ENCODE measurements at regions of chr1 and their contacts with region 1.

Region 1: DNA sequence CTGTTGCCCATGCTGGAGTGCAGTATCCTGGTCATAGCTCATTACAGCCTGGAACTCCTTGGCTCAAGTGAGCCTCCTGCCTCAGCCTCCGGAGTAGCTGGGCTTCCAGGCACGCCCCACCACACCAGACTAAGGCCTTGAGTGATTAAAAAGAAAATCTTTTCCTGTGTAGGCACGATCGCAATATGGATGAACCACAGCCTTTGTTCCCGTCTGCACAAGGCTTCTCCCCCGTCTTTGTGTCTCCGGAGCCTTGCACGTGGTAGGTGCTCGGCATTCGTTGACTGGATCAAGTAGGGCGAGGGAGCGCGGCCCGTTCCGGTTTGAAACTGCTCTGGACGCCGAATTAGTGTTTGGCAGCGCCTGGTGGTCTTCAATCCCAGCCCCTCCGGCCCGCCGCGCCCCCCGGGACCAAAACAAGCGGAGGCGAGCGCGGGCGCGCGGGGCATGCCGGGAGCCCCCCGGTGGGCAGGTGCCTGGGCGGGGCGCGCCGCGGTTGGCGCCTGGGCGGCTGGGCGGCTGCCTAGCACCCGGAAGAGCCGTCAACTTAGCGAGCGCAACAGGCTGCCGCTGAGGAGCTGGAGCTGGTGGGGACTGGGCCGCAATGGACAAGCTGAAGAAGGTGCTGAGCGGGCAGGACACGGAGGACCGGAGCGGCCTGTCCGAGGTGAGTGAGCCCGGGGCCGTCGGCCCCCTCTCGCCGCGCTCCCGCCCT is at the start of gene SFT2D2:
- DNase-seq: peak; percentile 86
- H3K4me3 Mint-ChIP-seq: peak within 1 kb of the TSS; percentile 88
- H3K27ac Mint-ChIP-seq: peak within 1 kb of the TSS; percentile 93
- H3K4me1 Mint-ChIP-seq: peaks cover 49% of the 10 kb centered on the region
- H3K27me3 Mint-ChIP-seq: no peaks in the 10 kb centered on the region
- CTCF ChIP-seq: no peak
- total RNA-seq, gene SFT2D2: 56.5 and 67.5 TPM in 2 replicates

Region 2: DNA sequence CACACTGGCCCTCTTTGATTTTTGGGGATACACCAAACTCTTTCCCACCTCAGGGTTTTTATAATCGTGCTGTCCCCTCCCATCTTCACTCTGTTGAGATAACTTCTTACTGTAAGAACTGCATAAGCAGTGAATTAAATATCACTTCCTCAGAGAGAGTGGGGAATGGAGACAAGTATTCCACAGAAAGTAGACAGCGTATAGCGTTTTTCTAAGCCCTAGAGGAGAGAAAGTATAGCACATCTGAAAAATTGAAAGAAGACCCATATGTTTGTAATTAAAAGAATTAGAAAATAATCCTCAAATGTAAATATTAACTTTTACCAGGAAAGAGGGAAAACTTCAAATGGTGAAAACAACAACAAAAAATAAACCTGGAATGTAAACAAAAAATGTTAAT is 156.2 kb before region 1 on chr1:
- CTCF ChIA-PET with region 1: no interaction called
- POLR2A ChIA-PET with region 1: no interaction called
- intact Hi-C with region 1: no loop called
- DNase-seq: no peak
- H3K4me3 Mint-ChIP-seq: no peak overlapping the region
- H3K27ac Mint-ChIP-seq: no peak overlapping the region
- H3K4me1 Mint-ChIP-seq: no peaks in the 10 kb centered on the region
- H3K27me3 Mint-ChIP-seq: no peaks in the 10 kb centered on the region
- CTCF ChIP-seq: no peak

Region 3: GRCh38 chr1:168092566-168093355 is 132.9 kb before region 1 on chr1:
- CTCF ChIA-PET with region 1: interaction called, 8 read pairs
- POLR2A ChIA-PET with region 1: no interaction called
- intact Hi-C with region 1: loop called (anchors 2 kb)
- DNase-seq: peak; percentile 57
- H3K4me3 Mint-ChIP-seq: no peak overlapping the region
- H3K27ac Mint-ChIP-seq: no peak overlapping the region
- H3K4me1 Mint-ChIP-seq: peaks cover 4% of the 10 kb centered on the region
- H3K27me3 Mint-ChIP-seq: no peaks in the 10 kb centered on the region
- CTCF ChIP-seq: peak; percentile 61

Region 4: GRCh38 chr1:168178638-168179437 is 46.8 kb before region 1 on chr1 and contains the start of gene TIPRL:
- CTCF ChIA-PET with region 1: interaction called, 13 read pairs
- POLR2A ChIA-PET with region 1: interaction called, 93 read pairs
- intact Hi-C with region 1: loop called (anchors 1 kb)
- DNase-seq: peak; percentile 100
- H3K4me3 Mint-ChIP-seq: no peak within 1 kb of the TSS
- H3K27ac Mint-ChIP-seq: no peak within 1 kb of the TSS
- H3K4me1 Mint-ChIP-seq: peaks cover 7% of the 10 kb centered on the region
- H3K27me3 Mint-ChIP-seq: no peaks in the 10 kb centered on the region
- CTCF ChIP-seq: peak; percentile 73
- total RNA-seq, gene TIPRL: 90.9 and 111 TPM in 2 replicates

Region 5: DNA sequence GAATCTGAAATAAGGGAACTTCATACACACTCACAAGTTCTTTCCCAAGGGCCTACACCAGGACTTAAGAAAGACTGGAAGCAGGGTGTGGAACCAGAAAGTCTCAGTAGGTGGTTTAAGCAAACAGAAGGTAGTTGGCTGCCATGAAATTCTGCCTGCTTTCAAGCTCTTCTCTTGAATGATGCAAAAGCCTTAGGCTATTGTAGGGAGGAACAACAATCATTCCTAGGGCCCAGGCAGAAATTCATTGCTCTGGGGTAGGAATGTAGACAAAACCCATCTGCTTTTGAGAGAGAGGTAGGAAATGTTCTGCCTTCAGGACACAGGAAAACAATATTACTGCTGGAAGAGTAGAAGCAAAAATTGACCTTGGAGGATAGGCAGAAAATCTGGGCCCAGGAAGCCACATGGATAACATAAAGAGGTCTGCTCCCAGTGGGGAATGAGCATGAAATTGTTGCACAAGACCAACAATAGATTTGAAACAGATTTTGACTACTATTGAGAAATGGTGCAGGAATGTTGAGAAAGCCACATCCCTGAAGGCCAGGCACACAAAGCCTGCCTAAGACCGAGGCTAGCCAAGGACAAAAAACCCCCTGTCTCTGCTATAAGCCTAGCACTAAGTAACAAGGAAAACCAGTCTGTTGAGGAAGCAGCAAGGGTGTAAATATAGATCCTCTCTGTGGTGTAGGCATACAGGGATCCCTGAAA is 22.5 kb before region 1 on chr1:
- CTCF ChIA-PET with region 1: interaction called, 3 read pairs
- POLR2A ChIA-PET with region 1: interaction called, 11 read pairs
- intact Hi-C with region 1: no loop called
- DNase-seq: peak; percentile 72
- H3K4me3 Mint-ChIP-seq: no peak overlapping the region
- H3K27ac Mint-ChIP-seq: peak overlapping the region; percentile 69
- H3K4me1 Mint-ChIP-seq: peaks cover 27% of the 10 kb centered on the region
- H3K27me3 Mint-ChIP-seq: no peaks in the 10 kb centered on the region
- CTCF ChIP-seq: no peak

Region 6: DNA sequence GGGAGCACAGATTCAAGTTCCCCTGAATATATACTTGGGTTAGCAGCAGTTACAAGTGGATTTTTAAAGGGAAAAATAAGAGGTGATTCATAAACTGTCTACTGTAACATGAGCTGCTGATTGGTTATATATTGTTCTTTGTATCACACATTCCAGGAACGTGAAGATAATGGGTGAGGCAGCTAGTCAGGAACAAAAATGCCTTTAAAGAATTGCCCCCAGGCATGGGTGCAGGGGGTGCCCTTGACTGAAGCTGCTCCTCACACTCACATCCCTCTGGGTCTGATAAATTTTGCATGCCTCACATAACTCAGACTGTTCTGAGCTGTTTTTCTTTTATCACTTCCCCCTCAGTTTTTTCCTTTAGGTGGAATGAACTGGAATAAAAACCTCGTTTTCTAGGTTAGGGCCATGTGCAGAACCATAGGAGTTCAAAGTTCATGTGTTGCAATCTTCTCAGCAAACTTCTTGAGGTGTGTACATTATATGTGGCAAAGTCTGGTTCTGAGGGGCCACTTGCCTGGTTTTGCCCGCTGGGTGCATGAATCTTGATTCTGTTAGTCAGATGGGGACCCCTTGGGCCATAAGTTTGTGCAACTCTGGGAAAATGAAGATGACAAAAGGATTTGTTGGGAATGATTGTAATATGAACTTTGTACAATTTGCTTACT is 76.2 kb after region 1 on chr1:
- CTCF ChIA-PET with region 1: interaction called, 4 read pairs
- POLR2A ChIA-PET with region 1: interaction called, 15 read pairs
- intact Hi-C with region 1: no loop called
- DNase-seq: peak; percentile 88
- H3K4me3 Mint-ChIP-seq: no peak overlapping the region
- H3K27ac Mint-ChIP-seq: peak overlapping the region; percentile 78
- H3K4me1 Mint-ChIP-seq: peaks cover 37% of the 10 kb centered on the region
- H3K27me3 Mint-ChIP-seq: no peaks in the 10 kb centered on the region
- CTCF ChIP-seq: no peak

Measured in MCF 10A (cell line).